Endothelial cell of umbilical vein (primary cell): ENCODE measurements at regions of chr3 and their contacts with region 1.

Region 1: DNA sequence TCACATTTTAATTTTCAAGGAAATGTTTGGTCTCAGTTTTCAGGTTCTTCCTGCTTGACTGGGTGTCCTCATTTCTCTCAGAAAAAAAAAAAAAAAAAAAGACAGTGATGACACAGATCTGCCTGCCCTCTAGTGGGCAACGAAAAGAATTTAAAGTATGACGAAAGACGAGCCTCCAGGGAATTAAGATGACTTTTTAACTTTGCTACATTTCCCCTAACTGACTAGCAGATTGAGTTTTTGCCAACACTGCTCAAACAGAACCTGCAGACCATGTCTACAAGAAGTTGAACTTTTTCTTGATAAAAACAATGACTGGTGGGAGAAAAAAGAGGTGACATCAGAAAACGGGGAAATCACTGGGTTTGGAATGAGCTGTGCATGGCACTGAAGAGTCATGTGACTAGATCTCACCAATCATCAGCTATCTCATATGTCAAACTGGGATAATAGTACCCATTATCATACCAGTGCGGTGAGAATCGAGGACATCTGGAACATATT is 40.8 kb downstream of the EOMES start:
- DNase-seq: peak; percentile 79
- H3K4me3 ChIP-seq: peak overlapping the region in 1 of 3 experiments; percentile 12
- H3K27ac ChIP-seq: peak overlapping the region; percentile 20
- H3K4me1 ChIP-seq: peaks cover 3% of the 10 kb centered on the region
- H3K27me3 ChIP-seq: no peaks in the 10 kb centered on the region
- CTCF ChIP-seq: peak; percentile 50 to 55
- POLR2A ChIP-seq: no peak

Region 2: DNA sequence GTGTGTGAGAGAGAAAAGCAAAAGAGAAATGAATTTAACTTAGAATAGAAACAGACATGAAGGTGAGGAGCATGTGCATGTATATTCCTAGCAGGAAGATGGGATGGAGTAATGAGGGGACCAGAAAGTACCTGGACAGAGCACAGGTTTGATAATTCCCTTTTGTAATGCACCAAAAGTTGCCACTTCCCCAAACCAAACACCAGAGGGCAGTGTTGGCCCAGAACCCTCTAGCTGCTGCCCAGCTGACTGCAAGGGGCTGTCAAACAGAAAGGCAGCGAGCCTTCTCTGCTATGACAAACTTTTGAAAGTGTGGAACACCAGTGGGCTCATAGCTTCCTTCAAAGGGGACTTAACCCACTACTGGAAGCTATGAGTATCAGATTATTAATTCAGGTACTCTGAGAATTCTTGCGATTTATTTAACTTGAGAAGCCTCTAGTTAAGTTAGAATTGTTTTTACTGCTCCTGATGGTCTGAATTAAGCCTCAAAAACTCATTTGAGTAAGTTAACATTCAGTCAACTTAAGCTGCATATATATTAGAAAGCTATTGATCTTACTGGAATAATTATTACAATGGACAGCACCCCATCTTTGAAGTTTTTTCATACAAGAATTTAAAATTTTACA is 547.0 kb before region 1 on chr3:
- CTCF ChIA-PET with region 1: interaction called, 10 read pairs
- POLR2A ChIA-PET with region 1: no interaction called
- dilution Hi-C with region 1: no loop called
- intact Hi-C with region 1: loop called (anchors 1 kb)
- DNase-seq: peak; percentile 72
- H3K4me3 ChIP-seq: no peak overlapping the region
- H3K27ac ChIP-seq: no peak overlapping the region
- H3K4me1 ChIP-seq: no peaks in the 10 kb centered on the region
- H3K27me3 ChIP-seq: no peaks in the 10 kb centered on the region
- CTCF ChIP-seq: peak; percentile 83 to 85
- POLR2A ChIP-seq: no peak

Region 3: GRCh38 chr3:27368831-27369607 is 312.3 kb before region 1 on chr3 and contains the start of gene NEK10:
- CTCF ChIA-PET with region 1: interaction called, 11 read pairs
- POLR2A ChIA-PET with region 1: no interaction called
- dilution Hi-C with region 1: no loop called
- intact Hi-C with region 1: no loop called
- DNase-seq: peak; percentile 94
- H3K4me3 ChIP-seq: peak within 1 kb of the TSS; percentile 24 to 65 (median 58)
- H3K27ac ChIP-seq: no peak within 1 kb of the TSS
- H3K4me1 ChIP-seq: peaks cover 2% of the 10 kb centered on the region
- H3K27me3 ChIP-seq: no peaks in the 10 kb centered on the region
- CTCF ChIP-seq: peak in 1 of 2 donors; percentile 1
- POLR2A ChIP-seq: no peak
- total RNA-seq, gene NEK10: 4.6 and 5.0 TPM in 2 replicates

Region 4: DNA sequence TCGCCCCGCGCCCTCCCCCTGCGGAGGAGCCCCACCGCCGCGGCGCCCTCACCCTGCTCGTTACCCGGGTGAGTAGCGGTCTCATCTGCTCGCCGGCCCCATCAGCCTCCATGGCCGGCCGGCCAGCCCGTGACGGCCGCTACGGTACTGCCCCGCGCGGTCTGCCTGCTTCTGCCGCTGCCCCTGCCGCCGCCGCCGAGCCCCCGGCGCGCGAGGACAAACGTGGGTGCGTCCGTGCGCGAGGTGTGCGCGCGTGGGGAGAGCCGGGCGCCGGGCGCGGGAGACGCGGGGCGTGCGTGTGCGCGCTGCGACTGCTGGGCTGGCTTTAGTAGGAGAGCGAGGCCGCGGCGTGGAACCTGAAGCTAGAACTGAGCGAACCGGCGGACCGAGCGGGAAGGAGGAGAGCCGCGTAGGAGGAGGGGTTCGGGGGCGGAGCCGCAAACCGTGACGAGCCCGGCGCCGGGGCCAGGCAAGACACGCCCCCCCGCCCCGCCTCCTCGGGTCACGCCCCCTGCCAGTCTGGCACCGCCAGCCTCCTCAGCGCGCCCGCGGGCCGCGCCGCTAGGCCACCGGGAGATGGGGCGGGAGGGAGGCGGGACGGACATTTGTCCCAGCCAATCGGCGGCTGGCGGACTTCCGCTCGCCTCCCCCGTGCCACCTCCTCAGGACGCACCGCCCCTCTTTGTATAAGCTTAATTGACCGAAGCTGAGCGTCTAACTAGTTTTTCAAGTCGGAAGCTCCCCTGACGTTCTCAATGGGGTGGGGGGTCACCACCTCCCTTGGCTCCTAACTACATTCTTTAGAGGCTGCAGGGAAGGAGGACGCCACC is 197.1 kb before region 1 on chr3 and contains the start of gene SLC4A7:
- CTCF ChIA-PET with region 1: interaction called, 35 read pairs
- POLR2A ChIA-PET with region 1: interaction called, 4 read pairs
- dilution Hi-C with region 1: no loop called
- intact Hi-C with region 1: loop called (anchors 1 kb)
- DNase-seq: peak; percentile 96
- H3K4me3 ChIP-seq: peak within 1 kb of the TSS; percentile 79 to 93 (median 88)
- H3K27ac ChIP-seq: peak within 1 kb of the TSS; percentile 67
- H3K4me1 ChIP-seq: peaks cover 29% of the 10 kb centered on the region
- H3K27me3 ChIP-seq: no peaks in the 10 kb centered on the region
- CTCF ChIP-seq: no peak
- POLR2A ChIP-seq: peak; percentile 96
- total RNA-seq, gene SLC4A7: 50.9 and 58.6 TPM in 2 replicates

Region 5: GRCh38 chr3:27559835-27560234 is 121.5 kb before region 1 on chr3:
- CTCF ChIA-PET with region 1: interaction called, 14 read pairs
- POLR2A ChIA-PET with region 1: no interaction called
- dilution Hi-C with region 1: no loop called
- intact Hi-C with region 1: no loop called
- DNase-seq: peak; percentile 99
- H3K4me3 ChIP-seq: no peak overlapping the region
- H3K27ac ChIP-seq: peak overlapping the region; percentile 85
- H3K4me1 ChIP-seq: peaks cover 18% of the 10 kb centered on the region
- H3K27me3 ChIP-seq: no peaks in the 10 kb centered on the region
- CTCF ChIP-seq: no peak
- POLR2A ChIP-seq: peak; percentile 27

Region 6: DNA sequence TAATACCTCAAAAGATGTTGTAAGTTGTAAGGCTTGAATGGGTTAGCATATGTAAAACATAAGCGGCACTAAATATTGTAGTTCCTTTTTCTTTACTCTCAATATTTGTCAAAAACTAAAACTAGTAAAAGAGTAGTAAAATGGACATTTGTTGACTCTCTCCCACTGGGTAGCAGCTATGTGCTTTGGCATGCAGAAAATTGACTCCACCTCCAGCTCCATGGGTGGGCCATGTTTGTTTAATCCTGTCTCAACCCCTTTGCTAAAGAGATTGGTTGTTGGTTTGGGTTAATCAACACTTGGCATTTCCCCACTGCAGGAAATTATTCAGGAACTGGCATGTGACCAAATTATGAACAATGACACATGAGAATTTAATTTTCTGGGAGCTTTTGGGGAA is 73.9 kb before region 1 on chr3:
- CTCF ChIA-PET with region 1: interaction called, 16 read pairs
- POLR2A ChIA-PET with region 1: no interaction called
- dilution Hi-C with region 1: no loop called
- intact Hi-C with region 1: no loop called
- DNase-seq: peak; percentile 84
- H3K4me3 ChIP-seq: no peak overlapping the region
- H3K27ac ChIP-seq: peak overlapping the region; percentile 54
- H3K4me1 ChIP-seq: peaks cover 16% of the 10 kb centered on the region
- H3K27me3 ChIP-seq: no peaks in the 10 kb centered on the region
- CTCF ChIP-seq: no peak
- POLR2A ChIP-seq: no peak

Region 7: DNA sequence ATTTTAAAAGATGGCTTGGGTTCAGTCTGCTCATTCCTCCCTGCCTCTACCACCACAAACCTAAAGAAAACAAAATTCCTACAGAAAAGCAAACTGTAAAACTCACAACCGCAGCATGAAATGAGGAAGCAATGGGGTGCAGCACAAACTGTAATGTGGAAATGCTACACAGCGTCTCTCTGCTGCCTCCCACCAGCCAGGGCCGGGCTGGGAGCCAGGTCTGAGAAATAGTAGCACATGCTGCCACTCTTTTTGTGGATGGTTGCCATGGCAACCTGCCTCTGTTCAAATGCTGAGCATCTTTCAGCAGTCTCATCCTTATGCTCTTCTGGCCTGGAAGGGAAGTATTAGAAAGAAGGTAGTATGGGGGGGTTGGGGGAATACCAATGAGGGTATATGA is 14.6 kb before region 1 on chr3:
- CTCF ChIA-PET with region 1: interaction called, 19 read pairs
- POLR2A ChIA-PET with region 1: no interaction called
- dilution Hi-C with region 1: no loop called
- intact Hi-C with region 1: no loop called
- DNase-seq: no peak
- H3K4me3 ChIP-seq: no peak overlapping the region
- H3K27ac ChIP-seq: no peak overlapping the region
- H3K4me1 ChIP-seq: no peaks in the 10 kb centered on the region
- H3K27me3 ChIP-seq: no peaks in the 10 kb centered on the region
- CTCF ChIP-seq: no peak
- POLR2A ChIP-seq: no peak